ENCODE measurements at regions of chr3 and their contacts with region 1.

Region 1: GRCh38 chr3:125125821-125126245 is 70.0 kb upstream of the HEG1 start:
- DNase-seq: peak; percentile 78
- H3K4me3 Mint-ChIP-seq: peak overlapping the region; percentile 9
- H3K27ac Mint-ChIP-seq: peak overlapping the region; percentile 68
- H3K4me1 Mint-ChIP-seq: peaks cover 59% of the 10 kb centered on the region
- H3K27me3 Mint-ChIP-seq: peaks cover 10% of the 10 kb centered on the region

Region 2: DNA sequence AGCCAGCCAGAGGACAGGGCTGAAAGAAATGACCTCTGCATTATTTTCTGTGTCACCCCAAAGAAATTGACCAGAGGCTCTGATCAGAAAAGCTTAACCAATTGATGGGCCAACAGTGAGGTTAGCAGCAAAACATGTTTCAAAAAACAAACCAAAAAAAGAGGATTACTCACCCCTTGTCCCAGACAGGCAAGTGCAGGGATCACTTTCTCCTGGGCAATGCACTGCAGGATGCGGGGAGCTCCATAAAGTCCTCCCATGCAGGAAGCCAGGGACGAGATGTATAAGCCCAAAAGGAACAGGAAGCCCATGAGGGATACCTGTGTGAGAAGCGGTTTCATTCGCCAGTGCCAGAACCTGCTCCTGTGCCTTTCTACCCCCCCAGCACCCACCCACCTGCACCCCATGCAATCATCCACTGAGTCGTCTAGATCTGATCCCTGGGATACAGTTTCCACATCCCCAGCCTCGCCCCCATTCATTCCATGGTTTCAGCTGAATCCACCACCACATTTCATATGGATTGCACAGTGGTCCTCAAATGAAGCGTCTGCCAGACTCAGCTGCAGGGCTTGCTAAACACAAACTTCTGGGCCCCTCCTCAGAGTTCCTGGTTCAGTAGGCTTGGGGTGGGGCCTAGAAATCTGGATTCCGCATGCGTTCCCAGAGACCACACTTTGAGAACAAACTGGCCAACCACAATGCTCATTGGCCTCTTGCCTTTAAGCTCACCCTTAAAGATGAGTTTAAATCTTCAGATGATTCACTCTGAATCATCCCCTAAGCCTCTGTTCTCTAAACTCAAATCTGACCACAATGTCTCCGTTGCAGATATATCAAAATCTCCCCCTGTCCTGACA is 15.6 kb before region 1 on chr3:
- intact Hi-C with region 1: loop called (anchors 2 kb)
- DNase-seq: peak; percentile 51
- H3K4me3 Mint-ChIP-seq: no peak overlapping the region
- H3K27ac Mint-ChIP-seq: no peak overlapping the region
- H3K4me1 Mint-ChIP-seq: peaks cover 35% of the 10 kb centered on the region
- H3K27me3 Mint-ChIP-seq: peaks cover 28% of the 10 kb centered on the region

Region 3: GRCh38 chr3:125418306-125418705 is 292.5 kb after region 1 on chr3:
- intact Hi-C with region 1: no loop called
- DNase-seq: no peak
- H3K4me3 Mint-ChIP-seq: no peak overlapping the region
- H3K27ac Mint-ChIP-seq: no peak overlapping the region
- H3K4me1 Mint-ChIP-seq: no peaks in the 10 kb centered on the region
- H3K27me3 Mint-ChIP-seq: peaks cover 8% of the 10 kb centered on the region